ENCODE measurements at regions of chr17 and their contacts with region 1.

Region 1: GRCh38 chr17:422196-422930 is 69.8 kb upstream of the RPH3AL start:
- DNase-seq: no peak
- ATAC-seq: no peak
- H3K4me3 ChIP-seq: no peak overlapping the region
- H3K27ac ChIP-seq: no peak overlapping the region
- H3K4me1 ChIP-seq: no peaks in the 10 kb centered on the region
- H3K27me3 ChIP-seq: no peaks in the 10 kb centered on the region
- CTCF ChIP-seq: no peak
- POLR2A ChIP-seq: no peak
- RAD21 ChIP-seq: no peak

Region 2: GRCh38 chr17:222172-222571 is 200.2 kb before region 1 on chr17:
- CTCF ChIA-PET with region 1: no interaction called
- POLR2A ChIA-PET with region 1: no interaction called
- dilution Hi-C with region 1: no loop called
- in situ Hi-C with region 1: no loop called
- intact Hi-C with region 1: no loop called
- DNase-seq: no peak
- ATAC-seq: no peak
- H3K4me3 ChIP-seq: no peak overlapping the region
- H3K27ac ChIP-seq: no peak overlapping the region
- H3K4me1 ChIP-seq: no peaks in the 10 kb centered on the region
- H3K27me3 ChIP-seq: peaks cover 2% of the 10 kb centered on the region; the same call in 1 of the 2 replicates
- CTCF ChIP-seq: no peak
- POLR2A ChIP-seq: no peak
- RAD21 ChIP-seq: no peak

Region 3: DNA sequence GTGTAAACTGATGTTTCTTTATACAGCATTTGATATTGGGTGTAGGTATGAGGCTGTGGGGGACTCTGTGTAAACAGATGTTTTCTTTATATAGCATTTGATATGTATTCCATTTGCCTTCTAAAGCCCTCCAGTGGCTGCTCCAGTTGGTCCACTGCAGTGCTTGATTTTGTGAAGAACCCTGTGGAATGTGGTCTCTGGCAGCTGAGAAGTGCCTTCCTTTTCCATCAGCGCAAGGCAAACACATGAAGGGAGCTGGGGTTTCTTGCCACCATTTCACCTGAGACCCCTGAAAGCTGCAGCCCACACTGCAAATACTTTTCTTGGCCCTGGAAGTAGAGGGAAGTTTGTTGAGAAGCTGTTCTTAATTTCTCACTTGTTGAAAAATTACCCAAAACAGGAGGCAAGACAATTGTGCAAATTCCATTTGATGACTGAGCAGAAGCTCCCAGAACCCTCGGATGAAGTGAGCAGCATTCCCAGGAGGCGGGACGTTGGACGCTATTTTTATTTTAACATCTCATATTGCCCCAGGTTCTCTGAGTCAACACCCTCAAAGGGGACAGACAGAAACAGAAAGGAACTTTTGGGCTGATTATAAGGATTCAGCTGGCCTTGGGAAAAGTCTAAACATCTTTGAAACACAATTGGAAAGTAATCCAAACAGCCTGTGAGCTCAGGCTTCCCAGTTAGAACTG is 88.8 kb after region 1 on chr17:
- CTCF ChIA-PET with region 1: no interaction called
- POLR2A ChIA-PET with region 1: no interaction called
- dilution Hi-C with region 1: no loop called
- in situ Hi-C with region 1: loop called (anchors 5 kb)
- intact Hi-C with region 1: no loop called
- DNase-seq: peak; percentile 82
- ATAC-seq: peak; percentile 88
- H3K4me3 ChIP-seq: no peak overlapping the region
- H3K27ac ChIP-seq: no peak overlapping the region
- H3K4me1 ChIP-seq: peaks cover 11% of the 10 kb centered on the region
- H3K27me3 ChIP-seq: no peaks in the 10 kb centered on the region
- CTCF ChIP-seq: no peak
- POLR2A ChIP-seq: no peak
- RAD21 ChIP-seq: no peak

Measured in IMR-90 (cell line).